ENCODE measurements at regions of chr9 and their contacts with region 1.

Region 1: GRCh38 chr9:34665381-34666250 is 3.2 kb upstream of the CCL27 start:
- DNase-seq: peak; percentile 56
- ATAC-seq: peak; percentile 79
- H3K4me3 ChIP-seq: peak overlapping the region; percentile 66 to 79 (median 66)
- H3K27ac ChIP-seq: peak overlapping the region; percentile 71
- H3K4me1 ChIP-seq: peaks cover 24% of the 10 kb centered on the region
- H3K27me3 ChIP-seq: no peaks in the 10 kb centered on the region
- CTCF ChIP-seq: peak; percentile 13; the same call in 1 of the 2 replicates
- EP300 ChIP-seq: no peak
- POLR2A ChIP-seq: no peak; a peak in 1 of 4 replicates
- RAD21 ChIP-seq: no peak

Region 2: GRCh38 chr9:34646211-34647083 is 19.2 kb before region 1 on chr9 and contains the start of gene GALT:
- CTCF ChIA-PET with region 1: interaction called, 12 read pairs
- POLR2A ChIA-PET with region 1: interaction called, 40 read pairs
- in situ Hi-C with region 1: no loop called
- intact Hi-C with region 1: no loop called
- DNase-seq: peak; percentile 87
- ATAC-seq: peak; percentile 82
- H3K4me3 ChIP-seq: peak within 1 kb of the TSS; percentile 75 to 88 (median 78)
- H3K27ac ChIP-seq: peak within 1 kb of the TSS; percentile 95
- H3K4me1 ChIP-seq: peaks cover 75% of the 10 kb centered on the region
- H3K27me3 ChIP-seq: no peaks in the 10 kb centered on the region; a peak in 1 of 5 replicates
- CTCF ChIP-seq: peak; percentile 84
- EP300 ChIP-seq: 0 out of 4 replicates have a peak, but pooled peaks of 1 of the 2 experiments have one; percentile 1
- POLR2A ChIP-seq: peak in 1 of 2 experiments; percentile 73; a peak in 2 of 4 replicates
- RAD21 ChIP-seq: peak; percentile 60
- total RNA-seq, gene GALT: 21.1 and 40.4 TPM in 2 replicates

Region 3: DNA sequence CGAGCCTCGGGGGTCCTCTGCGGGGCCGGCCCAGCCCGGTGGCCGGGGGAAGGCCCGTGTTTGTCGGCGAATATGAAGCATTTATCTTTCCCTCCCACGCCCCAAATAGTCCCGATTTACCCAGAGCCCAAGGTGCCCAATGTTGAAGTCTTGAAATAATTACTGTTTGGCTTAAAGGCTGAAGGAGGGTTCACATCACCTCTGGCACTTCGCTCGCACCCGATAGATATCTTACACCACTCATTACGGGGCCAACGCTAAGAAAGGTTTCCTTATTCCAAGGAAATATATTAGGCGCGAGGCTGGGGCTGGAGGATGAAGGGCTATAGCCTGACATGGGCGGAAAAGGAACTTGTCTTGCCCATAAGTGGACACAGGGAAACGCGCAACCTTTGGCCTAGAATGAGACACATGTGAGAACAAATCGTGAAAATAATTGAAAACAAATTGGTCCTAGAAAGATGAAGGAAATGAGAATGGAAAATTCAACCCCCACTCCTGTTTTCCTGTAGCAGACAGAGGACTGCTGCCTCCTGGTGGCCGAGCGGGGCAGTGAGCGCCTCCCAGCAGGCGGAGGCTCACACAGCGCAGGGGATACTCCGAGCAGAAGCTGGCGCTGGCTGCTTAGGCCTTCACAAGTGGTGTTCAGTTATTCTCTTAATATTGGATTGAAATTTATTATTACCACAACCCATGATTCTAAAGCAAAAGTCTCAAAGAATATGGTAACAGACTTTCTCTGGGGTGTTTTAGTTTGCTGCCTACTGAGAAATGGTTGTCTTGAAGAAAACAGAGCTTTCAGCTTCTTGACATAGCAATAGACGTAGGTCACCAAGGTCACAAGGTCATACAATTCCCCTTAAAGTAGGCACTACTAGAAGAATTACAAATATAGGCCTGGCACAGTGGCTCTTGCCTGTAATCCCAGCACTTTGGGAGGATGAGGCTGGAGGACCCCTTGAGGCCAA is 36.4 kb after region 1 on chr9:
- CTCF ChIA-PET with region 1: interaction called, 22 read pairs
- POLR2A ChIA-PET with region 1: interaction called, 6 read pairs
- in situ Hi-C with region 1: no loop called
- intact Hi-C with region 1: no loop called
- DNase-seq: peak; percentile 47
- ATAC-seq: peak; percentile 94
- H3K4me3 ChIP-seq: peak overlapping the region; percentile 52 to 72 (median 58)
- H3K27ac ChIP-seq: no peak overlapping the region
- H3K4me1 ChIP-seq: peaks cover 10% of the 10 kb centered on the region; the same call in 1 of the 2 replicates
- H3K27me3 ChIP-seq: peaks cover 5 to 18% of the 10 kb centered on the region in 2 experiments; a peak in 4 of 5 replicates
- CTCF ChIP-seq: peak; percentile 96
- EP300 ChIP-seq: no peak
- POLR2A ChIP-seq: no peak
- RAD21 ChIP-seq: peak; percentile 92

Region 4: GRCh38 chr9:34957492-34958410 is 292.1 kb after region 1 on chr9 and contains the start of gene PHF24:
- CTCF ChIA-PET with region 1: no interaction called
- POLR2A ChIA-PET with region 1: no interaction called
- in situ Hi-C with region 1: no loop called
- intact Hi-C with region 1: no loop called
- DNase-seq: no peak
- ATAC-seq: peak; percentile 94
- H3K4me3 ChIP-seq: peak within 1 kb of the TSS; percentile 21 to 59 (median 34); a peak in 4 of 6 replicates
- H3K27ac ChIP-seq: no peak within 1 kb of the TSS
- H3K4me1 ChIP-seq: no peaks in the 10 kb centered on the region; the same call in 1 of the 2 replicates
- H3K27me3 ChIP-seq: peaks cover 3 to 25% of the 10 kb centered on the region in 2 experiments
- CTCF ChIP-seq: no peak
- EP300 ChIP-seq: no peak
- POLR2A ChIP-seq: no peak
- RAD21 ChIP-seq: no peak
- total RNA-seq, gene PHF24: not detected in 2 replicates

Measured in HepG2 (cell line).